IMR-90 (cell line): ENCODE measurements at regions of chr11 and their contacts with region 1.

Region 1: GRCh38 chr11:132126973-132127899 is 756.8 kb downstream of the NTM start:
- DNase-seq: peak; percentile 94
- ATAC-seq: peak; percentile 86
- H3K4me3 ChIP-seq: no peak overlapping the region
- H3K27ac ChIP-seq: peak overlapping the region; percentile 86
- H3K4me1 ChIP-seq: peaks cover 11% of the 10 kb centered on the region
- H3K27me3 ChIP-seq: no peaks in the 10 kb centered on the region
- CTCF ChIP-seq: peak; percentile 93
- POLR2A ChIP-seq: 0 out of 2 replicates have a peak, but pooled peaks have one; percentile 34
- RAD21 ChIP-seq: peak; percentile 93

Region 2: GRCh38 chr11:131867457-131868257 is 259.6 kb before region 1 on chr11:
- CTCF ChIA-PET with region 1: interaction called, 52 read pairs
- POLR2A ChIA-PET with region 1: no interaction called
- dilution Hi-C with region 1: no loop called
- in situ Hi-C with region 1: loop called (anchors 5 kb)
- intact Hi-C with region 1: loop called (anchors 1 kb)
- DNase-seq: peak; percentile 89
- ATAC-seq: peak; percentile 98
- H3K4me3 ChIP-seq: no peak overlapping the region
- H3K27ac ChIP-seq: no peak overlapping the region
- H3K4me1 ChIP-seq: no peaks in the 10 kb centered on the region
- H3K27me3 ChIP-seq: no peaks in the 10 kb centered on the region
- CTCF ChIP-seq: peak; percentile 97
- POLR2A ChIP-seq: peak; percentile 65
- RAD21 ChIP-seq: peak; percentile 100

Region 3: GRCh38 chr11:131916638-131917037 is 210.6 kb before region 1 on chr11:
- CTCF ChIA-PET with region 1: interaction called, 28 read pairs
- POLR2A ChIA-PET with region 1: no interaction called
- dilution Hi-C with region 1: no loop called
- in situ Hi-C with region 1: loop called (anchors 5 kb)
- intact Hi-C with region 1: loop called (anchors 1 kb)
- DNase-seq: peak; percentile 31
- ATAC-seq: no peak
- H3K4me3 ChIP-seq: no peak overlapping the region
- H3K27ac ChIP-seq: no peak overlapping the region
- H3K4me1 ChIP-seq: peaks cover 5% of the 10 kb centered on the region
- H3K27me3 ChIP-seq: no peaks in the 10 kb centered on the region
- CTCF ChIP-seq: no peak
- POLR2A ChIP-seq: no peak
- RAD21 ChIP-seq: no peak

Region 4: GRCh38 chr11:132064987-132065620 is 62.1 kb before region 1 on chr11:
- CTCF ChIA-PET with region 1: interaction called, 14 read pairs
- POLR2A ChIA-PET with region 1: no interaction called
- dilution Hi-C with region 1: no loop called
- in situ Hi-C with region 1: no loop called
- intact Hi-C with region 1: no loop called
- DNase-seq: peak; percentile 99
- ATAC-seq: peak; percentile 80
- H3K4me3 ChIP-seq: no peak overlapping the region
- H3K27ac ChIP-seq: peak overlapping the region; percentile 27; the same call in 1 of the 2 replicates
- H3K4me1 ChIP-seq: peaks cover 26% of the 10 kb centered on the region
- H3K27me3 ChIP-seq: no peaks in the 10 kb centered on the region
- CTCF ChIP-seq: no peak
- POLR2A ChIP-seq: peak; percentile 68
- RAD21 ChIP-seq: peak; percentile 24; the same call in 1 of the 2 replicates

Region 5: DNA sequence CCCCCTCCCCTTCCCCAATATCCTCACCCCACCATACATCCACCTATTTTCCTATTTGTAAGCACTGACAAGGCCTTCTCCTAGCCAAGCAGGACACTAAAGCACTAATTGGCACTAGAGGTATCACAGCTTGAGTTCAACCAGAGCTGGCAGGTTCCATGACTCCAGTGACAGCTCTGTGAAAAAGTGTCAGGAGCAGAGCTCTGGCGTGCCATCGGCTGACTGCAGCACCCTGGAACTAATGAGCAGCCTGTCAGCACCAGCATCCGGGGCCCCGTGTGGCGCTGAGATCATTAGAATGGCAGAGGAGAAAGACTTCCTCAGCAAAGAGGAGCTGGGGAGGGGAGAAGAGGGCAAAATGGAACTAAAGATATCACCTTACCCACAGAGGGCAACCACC is 90.6 kb after region 1 on chr11:
- CTCF ChIA-PET with region 1: no interaction called
- POLR2A ChIA-PET with region 1: no interaction called
- dilution Hi-C with region 1: no loop called
- in situ Hi-C with region 1: no loop called
- intact Hi-C with region 1: no loop called
- DNase-seq: no peak
- ATAC-seq: no peak
- H3K4me3 ChIP-seq: no peak overlapping the region
- H3K27ac ChIP-seq: no peak overlapping the region
- H3K4me1 ChIP-seq: no peaks in the 10 kb centered on the region
- H3K27me3 ChIP-seq: no peaks in the 10 kb centered on the region
- CTCF ChIP-seq: no peak
- POLR2A ChIP-seq: no peak
- RAD21 ChIP-seq: no peak

Region 6: DNA sequence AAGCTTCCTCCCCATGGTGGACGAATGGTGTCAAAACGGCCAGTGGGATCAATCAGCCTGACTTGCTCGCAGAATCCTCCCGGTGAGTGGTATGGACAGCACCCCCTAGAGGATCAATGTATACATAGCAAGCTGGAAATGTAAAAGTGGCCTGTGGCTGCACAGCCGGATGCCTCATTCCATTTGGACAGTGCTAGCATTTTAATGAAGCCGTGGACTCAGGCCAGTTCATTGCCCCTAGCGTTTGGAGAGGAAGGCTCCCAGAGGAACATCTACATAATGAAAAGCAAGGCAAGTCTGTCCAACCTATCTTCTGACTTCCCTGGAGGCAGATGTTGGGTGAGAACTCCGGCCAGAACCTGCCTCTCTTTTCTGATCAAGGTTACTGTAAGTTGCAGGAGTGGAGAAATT is 185.5 kb after region 1 on chr11:
- CTCF ChIA-PET with region 1: interaction called, 3 read pairs
- POLR2A ChIA-PET with region 1: no interaction called
- dilution Hi-C with region 1: no loop called
- in situ Hi-C with region 1: no loop called
- intact Hi-C with region 1: loop called (anchors 2 kb)
- DNase-seq: peak; percentile 46
- ATAC-seq: peak; percentile 93
- H3K4me3 ChIP-seq: no peak overlapping the region
- H3K27ac ChIP-seq: no peak overlapping the region
- H3K4me1 ChIP-seq: peaks cover 5% of the 10 kb centered on the region
- H3K27me3 ChIP-seq: no peaks in the 10 kb centered on the region
- CTCF ChIP-seq: peak; percentile 56
- POLR2A ChIP-seq: no peak
- RAD21 ChIP-seq: no peak